ENCODE measurements at regions of chr13 and their contacts with region 1.

Region 1: GRCh38 chr13:28792992-28793391 is 27.1 kb upstream of the MTUS2 start:
- DNase-seq: no peak
- H3K4me3 Mint-ChIP-seq: no peak overlapping the region
- H3K27ac Mint-ChIP-seq: no peak overlapping the region
- H3K4me1 Mint-ChIP-seq: peaks cover 3% of the 10 kb centered on the region
- H3K27me3 Mint-ChIP-seq: peaks cover 42% of the 10 kb centered on the region

Region 2: DNA sequence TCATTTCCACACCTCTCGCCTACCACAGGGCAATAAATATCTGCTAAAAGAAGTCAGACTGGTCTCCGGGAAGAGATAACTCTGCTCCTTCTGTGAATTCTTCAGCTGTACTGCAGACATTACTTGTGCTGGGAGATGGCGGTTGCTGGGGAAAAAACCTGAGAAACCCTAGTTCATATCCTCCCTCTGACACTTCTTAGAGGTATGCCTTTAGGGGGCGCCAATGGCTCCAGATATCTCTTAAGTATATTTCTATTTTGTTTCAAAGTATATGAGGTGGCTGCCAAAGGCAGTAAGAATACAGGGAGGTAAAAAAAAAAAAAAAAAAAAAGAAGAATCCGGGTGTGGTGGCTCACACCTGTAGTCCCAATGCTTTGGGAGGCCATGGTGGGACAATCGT is 479.4 kb before region 1 on chr13:
- intact Hi-C with region 1: loop called (anchors 2 kb)
- DNase-seq: no peak
- H3K4me3 Mint-ChIP-seq: no peak overlapping the region
- H3K27ac Mint-ChIP-seq: no peak overlapping the region
- H3K4me1 Mint-ChIP-seq: no peaks in the 10 kb centered on the region
- H3K27me3 Mint-ChIP-seq: no peaks in the 10 kb centered on the region

Measured in activated T-helper 2 cell treated with anti-CD3 and anti-CD28 coated beads, Interferon-gamma antibody, Interleukin-2, Interleukin-4, amounts not matched to agents 10 μg/mL and 5 μg/mL and 100 μg/mL, durations not matched to agents 14 hours and 24 hours and 36 hours (primary cell).